PC-9 (cell line): ENCODE measurements at regions of chr2 and their contacts with region 1.

Region 1: GRCh38 chr2:220811952-220812570 is 760.0 kb downstream of the EPHA4 start:
- DNase-seq: peak; percentile 27 to 89
- H3K4me3 ChIP-seq: peak overlapping the region; percentile 32; the same call in 1 of the 2 replicates
- H3K27ac ChIP-seq: peak overlapping the region; percentile 87
- H3K4me1 ChIP-seq: peaks cover 32% of the 10 kb centered on the region
- H3K27me3 ChIP-seq: no peaks in the 10 kb centered on the region
- CTCF ChIP-seq: no peak

Region 2: DNA sequence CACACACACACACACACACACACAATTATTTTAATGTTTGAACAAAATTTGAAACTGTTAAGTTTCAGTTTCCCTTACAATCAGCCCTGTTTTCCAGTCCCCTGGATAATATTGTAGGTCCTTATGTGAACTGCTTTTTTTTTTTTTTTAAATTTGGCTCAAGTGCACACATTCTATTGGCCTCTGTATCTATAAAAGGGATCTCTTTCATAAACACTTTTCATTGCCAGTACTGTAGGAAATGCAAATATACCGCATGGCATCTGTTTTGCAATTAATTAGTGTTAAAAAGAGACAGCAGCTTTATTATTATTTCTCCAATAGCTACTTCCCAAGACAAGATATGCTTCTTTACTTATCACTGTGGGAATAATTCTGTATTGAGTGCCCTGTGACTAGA is 21.4 kb after region 1 on chr2:
- CTCF ChIA-PET with region 1: interaction called, 12 read pairs
- POLR2A ChIA-PET with region 1: no interaction called
- intact Hi-C with region 1: no loop called
- DNase-seq: no peak
- H3K4me3 ChIP-seq: no peak overlapping the region
- H3K27ac ChIP-seq: no peak overlapping the region
- H3K4me1 ChIP-seq: no peaks in the 10 kb centered on the region
- H3K27me3 ChIP-seq: no peaks in the 10 kb centered on the region
- CTCF ChIP-seq: no peak

Region 3: DNA sequence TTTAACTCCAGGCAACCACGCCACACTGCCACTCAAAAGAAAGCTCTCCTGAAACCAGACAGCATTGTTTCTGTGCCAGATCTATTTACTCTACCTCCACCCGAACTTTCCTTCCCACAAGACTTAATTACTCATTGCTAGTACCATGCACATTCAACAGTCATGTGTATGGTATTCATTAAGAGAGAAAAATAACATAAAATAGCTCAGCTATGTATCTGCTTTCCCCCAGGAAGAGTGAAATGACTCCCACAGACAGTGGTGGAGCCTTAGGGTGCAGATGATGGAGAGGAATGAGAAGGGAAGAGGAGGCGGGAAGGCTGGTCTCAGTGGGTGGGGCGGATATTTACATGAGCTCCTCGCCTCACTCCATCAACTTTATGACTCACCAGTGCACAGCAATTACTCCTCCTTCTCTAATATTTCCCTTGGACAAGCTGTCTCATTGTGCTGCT is 35.5 kb after region 1 on chr2:
- CTCF ChIA-PET with region 1: no interaction called
- POLR2A ChIA-PET with region 1: no interaction called
- intact Hi-C with region 1: loop called (anchors 1 kb)
- DNase-seq: peak; percentile 62 to 78
- H3K4me3 ChIP-seq: no peak overlapping the region
- H3K27ac ChIP-seq: peak overlapping the region; percentile 14
- H3K4me1 ChIP-seq: peaks cover 18% of the 10 kb centered on the region
- H3K27me3 ChIP-seq: no peaks in the 10 kb centered on the region
- CTCF ChIP-seq: no peak